Astrocyte of the cerebellum (primary cell): ENCODE measurements at regions of chr17 and their contacts with region 1.

Region 1: GRCh38 chr17:34542700-34543336 is 36.6 kb upstream of the TMEM132E start:
- DNase-seq: no peak
- H3K4me3 ChIP-seq: no peak overlapping the region
- CTCF ChIP-seq: peak; percentile 77

Region 2: DNA sequence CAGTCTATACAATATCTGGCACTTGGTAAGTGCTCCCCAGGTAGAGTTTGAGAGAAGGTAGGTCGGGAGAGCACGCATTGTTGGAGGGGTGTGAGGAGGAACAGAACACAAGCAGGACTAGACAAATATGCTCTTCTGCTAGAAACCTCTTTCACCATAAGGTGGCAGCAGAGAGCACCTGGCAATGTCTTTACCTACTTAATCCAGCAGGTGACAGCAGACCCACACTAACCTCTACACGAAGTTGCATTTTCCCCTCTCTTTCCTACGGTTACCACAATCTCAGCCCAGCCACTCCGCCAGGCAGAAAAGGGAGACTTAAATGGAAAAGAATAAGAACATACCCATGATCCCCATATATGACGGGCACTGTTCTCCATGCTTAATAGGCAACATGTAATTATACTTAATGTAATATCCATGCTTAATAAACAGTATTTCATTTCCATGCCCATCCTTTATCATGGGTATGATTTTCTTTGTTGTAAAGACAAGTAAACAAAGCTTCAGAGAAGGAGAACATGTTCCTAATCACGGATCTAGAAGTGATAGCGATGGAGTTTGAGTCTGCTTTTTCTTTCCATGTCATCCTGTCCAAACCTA is 342.8 kb before region 1 on chr17:
- in situ Hi-C with region 1: no loop called
- DNase-seq: peak; percentile 80
- H3K4me3 ChIP-seq: no peak overlapping the region
- CTCF ChIP-seq: peak; percentile 100

Region 3: GRCh38 chr17:34306466-34306865 is 236.4 kb before region 1 on chr17:
- in situ Hi-C with region 1: loop called (anchors 25 kb)
- DNase-seq: peak; percentile 74
- H3K4me3 ChIP-seq: no peak overlapping the region
- CTCF ChIP-seq: peak; percentile 67

Region 4: GRCh38 chr17:34443619-34444469 is 99.0 kb before region 1 on chr17:
- in situ Hi-C with region 1: loop called (anchors 25 kb)
- DNase-seq: no peak
- H3K4me3 ChIP-seq: no peak overlapping the region
- CTCF ChIP-seq: no peak

Region 5: DNA sequence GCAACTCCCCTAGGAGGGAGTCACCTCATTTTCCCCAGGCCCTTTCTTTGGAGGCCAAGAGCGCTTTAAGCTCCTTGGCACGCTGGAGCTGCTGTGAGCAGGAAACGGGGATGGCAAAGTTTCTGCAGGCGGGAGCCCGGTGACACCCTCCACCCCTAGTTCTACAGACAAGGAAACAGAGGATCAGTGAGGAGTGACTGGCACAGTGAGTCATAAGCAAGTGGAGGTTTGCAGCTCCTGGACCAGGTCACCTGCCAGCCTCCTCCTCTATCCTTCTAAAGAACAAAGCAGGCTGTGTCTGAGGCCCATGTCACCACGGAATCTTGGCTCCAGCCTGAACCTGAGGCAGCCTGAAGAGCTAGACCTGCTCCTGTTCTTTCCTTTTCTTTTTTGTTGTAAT is 178.5 kb after region 1 on chr17:
- in situ Hi-C with region 1: loop called (anchors 10 kb)
- DNase-seq: no peak
- H3K4me3 ChIP-seq: no peak overlapping the region
- CTCF ChIP-seq: no peak

Region 6: GRCh38 chr17:35141681-35142466 is 599.1 kb after region 1 on chr17 and contains the start of gene NLE1:
- in situ Hi-C with region 1: loop called (anchors 25 kb)
- DNase-seq: peak; percentile 48
- H3K4me3 ChIP-seq: peak within 1 kb of the TSS; percentile 95
- CTCF ChIP-seq: peak; percentile 93